ENCODE measurements at regions of chr3 and their contacts with region 1.

Region 1: GRCh38 chr3:149717391-149718056 is 34.8 kb downstream of the COMMD2 start:
- DNase-seq: peak; percentile 31
- ATAC-seq: peak; percentile 82
- H3K4me3 Mint-ChIP-seq: no peak overlapping the region
- H3K27ac Mint-ChIP-seq: no peak overlapping the region
- H3K4me1 Mint-ChIP-seq: peaks cover 4% of the 10 kb centered on the region
- H3K27me3 Mint-ChIP-seq: no peaks in the 10 kb centered on the region
- CTCF ChIP-seq: peak; percentile 55

Region 2: GRCh38 chr3:149512209-149512782 is 205.2 kb before region 1 on chr3:
- CTCF ChIA-PET with region 1: interaction called, 19 read pairs
- POLR2A ChIA-PET with region 1: no interaction called
- DNase-seq: peak; percentile 77
- ATAC-seq: peak; percentile 98
- H3K4me3 Mint-ChIP-seq: peak overlapping the region; percentile 47
- H3K27ac Mint-ChIP-seq: no peak overlapping the region
- H3K4me1 Mint-ChIP-seq: no peaks in the 10 kb centered on the region; the same call in 1 of the 2 replicates
- H3K27me3 Mint-ChIP-seq: no peaks in the 10 kb centered on the region
- CTCF ChIP-seq: peak; percentile 48; the same call in 1 of the 2 replicates

Region 3: GRCh38 chr3:149527531-149528339 is 189.8 kb before region 1 on chr3:
- CTCF ChIA-PET with region 1: interaction called, 33 read pairs
- POLR2A ChIA-PET with region 1: no interaction called
- DNase-seq: no peak
- ATAC-seq: peak; percentile 71
- H3K4me3 Mint-ChIP-seq: no peak overlapping the region
- H3K27ac Mint-ChIP-seq: peak overlapping the region; percentile 23; the same call in 1 of the 2 replicates
- H3K4me1 Mint-ChIP-seq: peaks cover 14% of the 10 kb centered on the region
- H3K27me3 Mint-ChIP-seq: no peaks in the 10 kb centered on the region
- CTCF ChIP-seq: no peak

Region 4: DNA sequence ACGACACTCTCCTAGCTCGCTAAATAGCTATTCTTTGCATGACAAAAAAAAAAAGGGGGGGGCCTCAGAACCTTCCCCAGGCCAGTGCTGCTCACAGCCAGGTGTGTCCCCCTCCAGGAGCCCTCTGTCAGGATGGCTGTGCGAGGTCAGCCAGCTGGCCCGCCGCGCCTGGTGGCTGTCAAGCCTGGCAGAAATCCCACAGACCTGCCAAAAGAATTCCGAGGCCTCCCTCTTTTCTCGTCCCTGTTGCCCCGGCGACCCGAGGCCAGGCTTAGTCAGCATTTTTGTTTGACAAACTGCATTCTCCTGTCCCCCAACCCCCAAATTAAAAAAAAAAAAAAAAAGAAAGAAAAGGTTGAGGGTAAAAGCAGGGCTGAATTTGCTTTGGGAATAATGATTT is 181.1 kb before region 1 on chr3:
- CTCF ChIA-PET with region 1: interaction called, 33 read pairs
- POLR2A ChIA-PET with region 1: no interaction called
- DNase-seq: peak; percentile 74
- ATAC-seq: peak; percentile 82
- H3K4me3 Mint-ChIP-seq: 0 out of 2 replicates have a peak overlapping the region, but pooled peaks have one; percentile 19
- H3K27ac Mint-ChIP-seq: no peak overlapping the region
- H3K4me1 Mint-ChIP-seq: peaks cover 51% of the 10 kb centered on the region
- H3K27me3 Mint-ChIP-seq: no peaks in the 10 kb centered on the region
- CTCF ChIP-seq: no peak

Region 5: DNA sequence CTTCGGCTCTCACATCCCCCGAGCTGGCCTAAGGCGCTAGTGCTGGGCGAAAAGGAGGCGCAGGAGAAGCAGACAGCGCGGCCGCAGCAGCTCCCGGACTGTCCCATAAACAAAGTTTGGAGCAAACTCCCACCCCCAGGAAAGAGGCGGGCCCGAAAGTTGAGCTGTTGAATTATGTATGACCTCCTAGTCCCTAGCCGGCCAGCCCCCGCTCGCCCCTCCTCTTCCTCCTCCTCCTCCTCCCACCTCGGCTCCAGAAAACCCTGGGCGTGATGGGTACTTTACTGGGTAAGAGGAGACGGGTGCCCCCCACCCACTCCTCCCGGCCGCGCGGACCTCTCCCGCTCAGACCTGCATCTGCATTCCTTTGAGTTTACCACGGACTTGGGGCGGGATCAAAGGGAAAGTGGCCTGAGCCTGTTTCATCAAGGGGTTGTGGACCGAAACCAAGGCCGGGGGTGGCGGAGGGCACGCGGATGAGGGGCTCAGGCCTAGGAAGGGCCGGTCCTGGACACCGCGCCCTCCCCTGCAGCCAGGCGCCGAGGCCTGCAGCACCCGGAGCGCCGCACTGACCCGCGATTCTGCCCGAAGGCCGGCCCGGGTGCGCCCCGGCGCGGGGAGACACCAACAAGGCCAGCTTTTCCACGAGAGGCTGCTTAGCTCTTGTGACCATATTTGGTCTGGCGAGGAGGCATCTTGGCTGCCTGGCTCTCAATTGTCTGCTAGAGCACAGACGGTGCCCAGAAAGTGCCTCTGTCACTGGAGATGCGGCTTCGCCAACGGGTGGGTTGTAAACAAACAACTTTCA is 59.4 kb before region 1 on chr3 and contains the start of gene WWTR1:
- CTCF ChIA-PET with region 1: interaction called, 22 read pairs
- POLR2A ChIA-PET with region 1: interaction called, 6 read pairs
- DNase-seq: peak; percentile 96
- ATAC-seq: peak; percentile 81
- H3K4me3 Mint-ChIP-seq: peak within 1 kb of the TSS; percentile 90
- H3K27ac Mint-ChIP-seq: peak within 1 kb of the TSS; percentile 99
- H3K4me1 Mint-ChIP-seq: peaks cover 70% of the 10 kb centered on the region
- H3K27me3 Mint-ChIP-seq: no peaks in the 10 kb centered on the region; the same call in 1 of the 2 replicates
- CTCF ChIP-seq: no peak
- total RNA-seq, gene WWTR1: 24.6 to 30.0 TPM (median 25.5 TPM) in 3 replicates

Region 6: DNA sequence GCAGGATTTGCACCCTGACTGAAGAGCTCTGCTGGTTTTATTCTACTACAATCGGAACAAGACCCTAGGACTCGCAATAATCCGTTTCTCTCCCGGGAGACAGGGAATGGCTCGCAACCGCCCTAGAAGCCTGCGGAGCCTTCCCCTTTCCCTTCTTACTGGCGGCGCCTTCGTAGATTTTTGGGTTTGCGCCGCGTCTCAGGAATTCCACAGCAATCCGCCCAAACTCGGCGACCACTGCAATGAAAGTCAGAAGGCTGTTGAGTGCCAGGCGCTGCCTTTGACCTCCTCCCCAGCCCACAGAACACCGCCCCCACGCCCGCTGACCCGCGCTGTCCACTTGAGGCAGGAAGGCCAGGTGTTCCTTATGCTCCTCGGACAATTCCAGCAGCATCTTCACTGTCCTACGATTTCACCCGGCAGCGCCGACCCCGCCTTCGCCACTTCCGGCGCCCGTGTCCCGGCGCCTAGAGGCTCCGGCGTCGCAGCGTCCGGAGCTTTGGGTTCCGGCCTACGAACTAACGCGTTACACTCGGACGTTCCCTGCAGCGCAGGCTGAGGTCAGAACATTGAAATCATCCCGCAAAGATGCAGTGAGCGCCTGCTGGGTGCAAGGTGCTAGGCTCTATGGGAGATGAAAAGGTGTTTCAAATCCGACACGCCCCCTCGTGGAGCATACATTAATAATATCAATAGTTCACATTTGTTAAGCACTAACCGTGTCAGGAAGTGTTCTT is 34.7 kb after region 1 on chr3 and contains the start of gene COMMD2:
- CTCF ChIA-PET with region 1: interaction called, 10 read pairs
- POLR2A ChIA-PET with region 1: no interaction called
- DNase-seq: peak; percentile 72
- ATAC-seq: peak; percentile 99
- H3K4me3 Mint-ChIP-seq: peak within 1 kb of the TSS; percentile 97
- H3K27ac Mint-ChIP-seq: peak within 1 kb of the TSS; percentile 93
- H3K4me1 Mint-ChIP-seq: 0 out of 2 replicates have a peak, but pooled peaks cover 4% of the 10 kb centered on the region
- H3K27me3 Mint-ChIP-seq: peaks cover 3% of the 10 kb centered on the region; the same call in 1 of the 2 replicates
- CTCF ChIP-seq: no peak
- total RNA-seq, gene COMMD2: 51.3 to 52.9 TPM (median 52.1 TPM) in 3 replicates

Measured in WTC11 (cell line).